Thyroid gland (tissue), 4 donors: ENCODE measurements at regions of chr2 and their contacts with region 1.

Region 1: DNA sequence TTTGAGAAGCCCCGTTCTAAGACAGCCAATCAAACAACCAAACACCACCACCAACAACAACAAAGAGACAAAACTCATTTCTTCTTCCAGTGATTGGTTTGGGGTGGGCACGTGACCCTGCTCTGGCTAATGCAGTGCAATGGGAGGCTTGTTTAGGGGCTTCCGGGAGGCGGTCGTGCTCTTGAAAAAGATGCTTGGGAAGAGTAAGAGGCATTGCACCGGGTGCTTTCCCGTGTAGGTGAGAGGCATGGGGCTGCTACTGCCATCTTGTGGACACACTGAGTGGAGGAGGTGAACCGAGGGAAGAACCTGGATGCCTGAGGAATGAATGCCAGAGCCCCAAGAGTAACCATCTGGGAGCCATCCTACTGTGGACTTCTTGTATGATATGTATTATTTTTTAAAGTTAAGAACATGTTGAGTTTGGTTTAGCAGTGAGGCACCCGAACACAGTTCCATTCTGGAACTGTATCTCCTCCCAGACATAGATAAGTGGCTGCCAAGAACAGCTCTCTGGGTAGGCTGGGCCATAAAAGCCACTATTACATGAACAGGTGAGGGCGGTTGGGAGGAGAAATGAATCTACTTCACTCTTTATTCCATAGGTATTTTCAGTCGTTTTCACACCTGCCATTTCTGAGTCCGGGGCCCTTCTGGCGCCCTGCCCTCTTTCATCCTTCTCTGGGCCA is 19.1 kb upstream of the ARHGAP25 start:
- DNase-seq: peak; percentile 64 to 73
- H3K4me3 ChIP-seq: no peak overlapping the region
- H3K27ac ChIP-seq: no peak overlapping the region
- H3K4me1 ChIP-seq: no peaks in the 10 kb centered on the region
- H3K27me3 ChIP-seq: no peaks in the 10 kb centered on the region
- CTCF ChIP-seq: peak; percentile 22 to 80 (median 42)
- POLR2A ChIP-seq: no peak

Region 2: DNA sequence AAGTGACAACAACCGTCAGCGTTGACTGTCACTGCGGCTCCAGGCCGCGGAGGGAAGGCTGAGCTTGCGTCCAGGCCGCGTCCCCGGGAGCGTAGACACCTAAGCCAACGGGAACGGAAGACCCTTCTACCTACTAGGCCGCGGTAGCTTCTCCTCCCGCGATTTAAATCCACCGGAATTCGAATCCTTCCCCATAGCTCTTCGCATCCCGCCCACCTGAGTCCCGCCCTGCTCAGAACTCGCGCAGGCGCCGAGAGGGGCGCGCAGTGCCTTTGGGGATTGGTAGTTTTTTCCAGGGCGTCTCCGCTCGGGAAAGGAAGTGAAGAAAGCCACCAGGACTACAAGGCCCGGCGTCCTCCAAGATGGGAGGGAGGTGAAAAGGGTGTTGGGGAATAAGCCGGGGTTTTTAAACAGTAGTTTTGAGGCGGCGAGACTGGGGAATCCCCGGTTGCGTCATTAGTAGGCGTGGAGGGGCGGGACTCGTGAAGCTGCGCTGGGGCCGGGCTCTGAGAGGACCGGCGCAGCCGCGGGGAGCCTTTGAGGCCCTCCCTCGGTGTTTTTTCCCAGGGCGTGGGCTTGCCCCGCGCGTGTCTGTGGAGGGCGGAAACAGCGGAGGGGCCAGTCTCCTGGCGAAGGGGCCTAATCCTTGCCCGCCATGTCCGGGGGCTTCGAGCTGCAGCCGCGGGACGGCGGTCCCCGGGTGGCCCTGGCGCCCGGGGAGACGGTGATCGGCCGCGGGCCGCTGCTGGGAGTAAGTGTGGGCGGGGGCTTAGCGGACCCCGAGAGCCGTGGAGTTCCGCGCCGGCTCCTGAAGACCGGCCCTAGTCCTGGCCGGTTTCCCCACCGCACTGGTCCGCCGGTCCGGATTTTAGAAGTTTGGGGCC is 248.2 kb before region 1 on chr2 and contains the starts of genes APLF and FBXO48:
- intact Hi-C with region 1: loop called (anchors 10 kb)
- DNase-seq: peak; percentile 98 to 99
- H3K4me3 ChIP-seq: peak within 1 kb of the TSS; percentile 67 to 95 (median 81)
- H3K27ac ChIP-seq: peak within 1 kb of the TSS; percentile 52 to 79 (median 71)
- H3K4me1 ChIP-seq: peaks cover 5 to 9% of the 10 kb centered on the region in 2 donors
- H3K27me3 ChIP-seq: no peaks in the 10 kb centered on the region
- CTCF ChIP-seq: no peak
- POLR2A ChIP-seq: peak in 1 of 2 donors; percentile 72
- total RNA-seq, gene APLF: 8.7 to 12.9 (median 9.6) TPM
- total RNA-seq, gene FBXO48: 0.63 to 1.8 (median 1.0) TPM

Region 3: DNA sequence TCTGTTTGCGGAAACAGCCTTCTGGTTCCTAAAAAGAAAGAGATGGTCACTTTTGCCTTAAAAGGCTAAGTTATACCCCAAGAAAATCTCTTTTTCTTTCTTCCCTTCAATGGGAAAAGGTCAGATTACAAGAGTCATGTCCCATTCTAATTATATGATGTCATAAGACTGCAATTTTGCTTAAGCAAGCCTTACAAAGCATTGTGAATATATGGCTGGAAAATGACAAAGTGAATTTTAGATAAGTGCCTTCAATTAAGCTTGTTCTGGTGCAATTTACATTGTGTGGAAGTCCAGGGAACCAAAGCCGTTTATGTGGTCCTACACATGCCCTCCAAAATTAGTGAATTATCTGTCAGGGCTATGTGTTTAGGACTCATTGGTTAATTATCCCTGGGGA is 163.3 kb after region 1 on chr2:
- intact Hi-C with region 1: no loop called
- DNase-seq: no peak
- H3K4me3 ChIP-seq: no peak overlapping the region
- H3K27ac ChIP-seq: no peak overlapping the region
- H3K4me1 ChIP-seq: no peaks in the 10 kb centered on the region
- H3K27me3 ChIP-seq: no peaks in the 10 kb centered on the region
- CTCF ChIP-seq: no peak
- POLR2A ChIP-seq: no peak

Region 4: DNA sequence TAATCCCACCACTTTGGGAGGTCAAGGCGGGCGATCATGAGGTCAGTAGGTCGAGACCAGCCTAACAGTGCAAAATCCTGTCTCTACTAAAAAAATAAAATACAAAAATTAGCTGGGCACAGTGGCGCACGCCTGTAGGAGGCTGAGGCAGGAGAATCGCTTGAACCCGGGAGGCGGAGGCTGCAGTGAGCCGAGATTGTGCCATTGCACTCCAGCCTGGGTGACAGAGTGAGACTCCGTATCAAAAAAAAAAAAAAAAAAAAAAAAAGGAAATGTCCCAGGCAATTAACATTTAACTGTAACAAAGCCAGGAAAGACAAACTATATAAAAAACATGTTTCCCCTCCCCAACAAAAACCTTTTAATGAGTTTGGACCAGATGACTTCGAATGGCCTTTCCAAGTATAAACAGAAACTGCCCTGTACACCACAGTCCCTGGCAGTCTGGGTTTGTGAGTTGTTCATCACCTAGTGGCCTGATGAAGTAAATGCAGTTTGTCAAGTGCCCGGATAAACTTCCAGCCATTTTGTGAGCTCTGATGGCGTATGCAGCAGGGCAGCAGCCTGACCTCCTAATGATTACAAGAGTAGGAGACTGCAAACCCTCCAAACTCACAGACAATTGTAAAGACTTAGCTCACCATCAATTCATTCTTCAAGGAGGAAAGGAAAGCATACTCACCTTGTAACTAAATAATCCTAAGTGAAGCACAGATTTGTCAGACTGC is 1355.2 kb after region 1 on chr2:
- intact Hi-C with region 1: no loop called
- DNase-seq: peak; percentile 63 to 71
- H3K4me3 ChIP-seq: no peak overlapping the region
- H3K27ac ChIP-seq: peak overlapping the region; percentile 75 to 92 (median 92)
- H3K4me1 ChIP-seq: peaks cover 23 to 52% of the 10 kb centered on the region in 2 donors
- H3K27me3 ChIP-seq: no peaks in the 10 kb centered on the region
- CTCF ChIP-seq: peak; percentile 57 to 92 (median 84)
- POLR2A ChIP-seq: peak in 1 of 2 donors; percentile 16